ENCODE measurements at regions of chr1 and their contacts with region 1.

Region 1: GRCh38 chr1:53196485-53197270 is at the start of gene CPT2:
- DNase-seq: peak; percentile 94
- H3K4me3 Mint-ChIP-seq: peak within 1 kb of the TSS; percentile 96
- H3K27ac Mint-ChIP-seq: peak within 1 kb of the TSS; percentile 97
- H3K4me1 Mint-ChIP-seq: peaks cover 21% of the 10 kb centered on the region
- H3K27me3 Mint-ChIP-seq: no peaks in the 10 kb centered on the region
- total RNA-seq, gene CPT2: 11.3 to 13.8 TPM

Region 2: DNA sequence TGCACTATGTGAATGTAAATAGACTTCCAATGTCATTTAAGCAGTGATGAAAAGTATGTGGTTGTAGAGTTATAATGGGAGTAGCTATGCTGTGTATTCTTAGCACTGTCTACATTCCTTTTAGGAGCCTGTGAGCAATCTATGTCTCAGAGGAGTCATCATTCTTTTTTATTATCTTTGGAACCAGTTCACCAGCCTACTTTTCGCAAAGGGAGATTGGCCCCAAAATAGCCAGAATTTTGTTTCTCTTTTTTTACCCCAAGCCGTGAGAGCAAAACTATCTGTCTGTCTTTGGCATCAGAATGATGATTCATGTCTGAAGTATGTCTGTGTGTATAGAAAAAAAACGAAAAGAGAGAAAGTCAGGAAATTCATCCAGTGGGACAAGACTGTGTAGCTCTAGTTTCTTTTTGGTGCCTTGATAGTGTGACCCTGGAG is 1535.6 kb before region 1 on chr1:
- CTCF ChIA-PET with region 1: no interaction called
- intact Hi-C with region 1: no loop called
- DNase-seq: no peak
- H3K4me3 Mint-ChIP-seq: no peak overlapping the region
- H3K27ac Mint-ChIP-seq: no peak overlapping the region
- H3K4me1 Mint-ChIP-seq: no peaks in the 10 kb centered on the region
- H3K27me3 Mint-ChIP-seq: no peaks in the 10 kb centered on the region

Region 3: GRCh38 chr1:52920791-52921291 is 275.8 kb before region 1 on chr1:
- CTCF ChIA-PET with region 1: no interaction called
- intact Hi-C with region 1: loop called (anchors 5 kb)
- DNase-seq: no peak
- H3K4me3 Mint-ChIP-seq: peak overlapping the region; percentile 78
- H3K27ac Mint-ChIP-seq: no peak overlapping the region
- H3K4me1 Mint-ChIP-seq: peaks cover 27% of the 10 kb centered on the region
- H3K27me3 Mint-ChIP-seq: no peaks in the 10 kb centered on the region

Region 4: DNA sequence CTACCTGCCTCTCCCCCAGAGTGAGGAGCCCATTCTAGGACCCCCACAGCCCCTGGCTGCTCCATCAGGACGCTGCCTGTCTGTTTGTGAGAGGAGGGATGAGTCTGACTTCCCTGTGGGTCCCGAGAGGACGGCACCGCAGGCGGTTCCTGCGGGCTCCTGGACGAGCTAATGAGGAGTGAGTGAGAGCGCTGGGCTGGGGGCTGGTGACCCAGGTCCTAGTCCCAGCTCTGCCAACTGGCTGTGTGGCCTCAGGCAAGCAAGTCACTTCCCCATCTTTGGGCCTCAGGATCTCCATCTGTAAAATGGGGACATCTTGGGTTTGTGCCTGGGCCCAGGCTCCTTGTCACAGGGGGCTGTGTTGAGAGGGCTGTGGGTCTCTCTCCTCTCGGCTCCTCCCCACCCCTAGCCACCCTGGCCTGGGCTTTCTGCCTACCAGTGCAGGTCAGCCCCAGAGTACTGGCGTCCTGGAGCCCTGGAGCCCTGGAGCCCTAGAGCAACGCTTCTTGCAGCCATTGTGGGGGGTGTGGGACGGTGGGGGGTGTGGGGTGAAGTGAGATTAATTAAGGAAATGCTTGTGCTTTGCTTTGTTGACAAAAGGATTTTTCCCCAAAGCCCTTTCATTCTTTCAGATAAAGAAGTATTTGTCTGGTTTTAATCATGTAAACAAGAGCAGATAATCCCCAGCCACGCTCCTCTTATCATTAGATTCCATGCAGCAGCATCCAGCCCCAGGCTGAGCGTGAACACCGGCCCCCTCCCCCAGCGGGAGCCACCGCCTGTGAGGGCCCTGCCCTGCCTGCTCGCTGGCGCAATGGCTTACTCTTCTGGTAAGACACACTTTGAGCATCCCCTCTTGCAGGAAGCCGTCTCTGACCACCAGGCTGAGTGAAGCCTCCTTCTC is 81.0 kb before region 1 on chr1:
- CTCF ChIA-PET with region 1: no interaction called
- intact Hi-C with region 1: no loop called
- DNase-seq: no peak
- H3K4me3 Mint-ChIP-seq: no peak overlapping the region
- H3K27ac Mint-ChIP-seq: no peak overlapping the region
- H3K4me1 Mint-ChIP-seq: peaks cover 8% of the 10 kb centered on the region
- H3K27me3 Mint-ChIP-seq: peaks cover 2% of the 10 kb centered on the region

Region 5: DNA sequence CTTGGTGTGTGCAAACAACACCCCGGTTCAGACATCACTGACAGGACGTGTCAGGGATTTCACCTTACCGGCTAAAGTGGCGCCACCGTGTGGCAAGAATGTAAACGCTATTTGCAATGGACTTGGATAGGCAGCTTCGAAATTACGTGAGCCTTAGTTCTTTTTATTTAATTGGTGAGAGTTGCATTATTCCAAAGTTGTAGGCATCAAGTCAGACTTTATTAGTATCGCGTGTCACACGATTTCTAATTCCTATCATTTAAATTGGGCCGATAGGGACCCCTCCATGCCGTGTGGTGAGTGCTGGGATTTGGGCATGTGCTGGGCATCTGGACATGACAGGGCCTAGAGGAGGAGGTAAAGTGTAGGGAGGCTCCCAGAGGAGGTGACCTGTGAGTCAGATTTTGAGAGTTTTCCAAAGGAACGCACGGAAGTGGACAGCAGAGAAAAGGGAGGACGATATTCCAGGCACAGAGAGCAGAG is 14.5 kb before region 1 on chr1:
- CTCF ChIA-PET with region 1: interaction called, 30 read pairs
- intact Hi-C with region 1: no loop called
- DNase-seq: peak; percentile 95
- H3K4me3 Mint-ChIP-seq: no peak overlapping the region
- H3K27ac Mint-ChIP-seq: no peak overlapping the region
- H3K4me1 Mint-ChIP-seq: no peaks in the 10 kb centered on the region
- H3K27me3 Mint-ChIP-seq: peaks cover 4% of the 10 kb centered on the region

Region 6: GRCh38 chr1:53238197-53239155 is 41.8 kb after region 1 on chr1 and contains the start of gene MAGOH:
- CTCF ChIA-PET with region 1: no interaction called
- intact Hi-C with region 1: loop called (anchors 1 kb)
- DNase-seq: peak; percentile 96
- H3K4me3 Mint-ChIP-seq: peak within 1 kb of the TSS; percentile 94
- H3K27ac Mint-ChIP-seq: peak within 1 kb of the TSS; percentile 82
- H3K4me1 Mint-ChIP-seq: peaks cover 28% of the 10 kb centered on the region
- H3K27me3 Mint-ChIP-seq: no peaks in the 10 kb centered on the region
- total RNA-seq, gene MAGOH: 83.7 to 87.2 TPM